Mammary epithelial cell (primary cell): ENCODE measurements at regions of chr15 and their contacts with region 1.

Region 1: GRCh38 chr15:27705056-27705455 is 394.1 kb downstream of the OCA2 start:
- DNase-seq: no peak
- H3K4me3 ChIP-seq: no peak overlapping the region
- H3K27ac ChIP-seq: no peak overlapping the region
- H3K4me1 ChIP-seq: no peaks in the 10 kb centered on the region
- H3K27me3 ChIP-seq: no peaks in the 10 kb centered on the region
- CTCF ChIP-seq: no peak

Region 2: GRCh38 chr15:27627623-27628022 is 77.4 kb before region 1 on chr15:
- CTCF ChIA-PET with region 1: no interaction called
- dilution Hi-C with region 1: no loop called
- in situ Hi-C with region 1: no loop called
- intact Hi-C with region 1: no loop called
- DNase-seq: no peak
- H3K4me3 ChIP-seq: no peak overlapping the region
- H3K27ac ChIP-seq: no peak overlapping the region
- H3K4me1 ChIP-seq: no peaks in the 10 kb centered on the region
- H3K27me3 ChIP-seq: no peaks in the 10 kb centered on the region
- CTCF ChIP-seq: no peak

Region 3: GRCh38 chr15:27820232-27820631 is 115.2 kb after region 1 on chr15:
- CTCF ChIA-PET with region 1: no interaction called
- dilution Hi-C with region 1: loop called (anchors 25 kb)
- in situ Hi-C with region 1: no loop called
- intact Hi-C with region 1: no loop called
- DNase-seq: no peak
- H3K4me3 ChIP-seq: no peak overlapping the region
- H3K27ac ChIP-seq: no peak overlapping the region
- H3K4me1 ChIP-seq: no peaks in the 10 kb centered on the region
- H3K27me3 ChIP-seq: no peaks in the 10 kb centered on the region
- CTCF ChIP-seq: no peak